ENCODE measurements at regions of chr6 and their contacts with region 1.

Region 1: GRCh38 chr6:100001915-100002388 is 7.9 kb upstream of the MCHR2 start:
- DNase-seq: peak; percentile 66
- H3K4me3 Mint-ChIP-seq: no peak overlapping the region
- H3K27ac Mint-ChIP-seq: no peak overlapping the region
- H3K4me1 Mint-ChIP-seq: peaks cover 8% of the 10 kb centered on the region
- H3K27me3 Mint-ChIP-seq: no peaks in the 10 kb centered on the region
- CTCF ChIP-seq: peak; percentile 91

Region 2: DNA sequence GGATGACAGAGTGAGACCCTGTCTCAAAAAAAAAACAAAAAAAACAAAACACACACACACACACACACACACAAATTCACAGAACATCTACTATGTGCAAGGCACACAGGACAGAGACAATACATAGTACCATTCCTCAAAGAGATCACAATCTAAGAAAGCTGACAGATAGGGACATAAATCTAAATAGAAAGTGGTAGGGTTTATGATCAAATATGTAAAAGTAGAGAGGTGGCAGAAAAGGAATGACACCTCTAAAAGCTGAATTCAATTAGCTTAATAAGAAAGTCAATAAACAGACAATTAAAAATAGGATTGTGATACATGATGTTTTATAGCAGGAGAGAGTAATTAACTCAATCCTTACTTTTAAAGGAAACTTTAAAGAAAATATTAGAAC is 528.2 kb before region 1 on chr6:
- CTCF ChIA-PET with region 1: no interaction called
- POLR2A ChIA-PET with region 1: no interaction called
- intact Hi-C with region 1: no loop called
- DNase-seq: no peak
- H3K4me3 Mint-ChIP-seq: no peak overlapping the region
- H3K27ac Mint-ChIP-seq: no peak overlapping the region
- H3K4me1 Mint-ChIP-seq: peaks cover 5% of the 10 kb centered on the region
- H3K27me3 Mint-ChIP-seq: no peaks in the 10 kb centered on the region
- CTCF ChIP-seq: no peak

Region 3: DNA sequence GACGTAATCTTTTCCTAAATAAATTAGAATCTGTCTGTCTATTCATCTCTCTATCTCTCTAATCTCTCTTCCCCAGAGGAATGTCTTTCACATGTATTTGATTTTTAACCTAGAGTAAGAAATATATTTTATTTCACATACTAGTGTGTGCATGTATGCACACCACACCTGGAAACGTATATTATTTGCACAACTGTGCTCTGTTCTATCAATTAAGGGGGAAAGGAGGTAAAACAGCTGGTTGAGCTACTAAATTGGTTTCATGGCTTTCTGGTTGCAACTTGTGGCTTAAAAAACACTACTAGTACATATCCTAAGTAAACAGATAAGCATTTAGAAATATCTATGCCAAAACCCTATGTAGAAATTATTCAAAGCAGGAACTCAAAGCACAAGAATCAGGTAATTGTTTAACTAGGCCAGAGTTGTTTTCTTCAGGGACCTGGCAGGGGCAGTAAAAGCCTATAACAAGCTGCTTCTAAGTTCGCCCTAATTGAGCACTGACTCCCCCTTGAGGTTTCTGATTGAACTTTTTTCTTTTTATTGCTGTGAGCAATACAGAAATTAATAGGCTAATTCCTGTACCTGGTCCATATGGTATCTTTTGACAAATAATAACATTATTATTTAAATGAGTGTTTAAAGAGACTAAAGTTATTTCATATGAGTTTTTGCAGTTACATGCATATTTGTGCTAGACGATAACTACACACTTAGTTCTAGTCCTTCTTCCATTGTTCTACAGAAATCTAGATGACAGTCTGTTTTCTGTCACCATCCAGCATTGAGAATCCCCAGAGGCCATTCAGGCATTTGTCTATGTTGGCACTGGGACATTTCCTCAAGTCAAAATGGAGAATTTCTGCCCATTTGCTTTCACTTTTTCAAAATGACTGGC is 96.5 kb before region 1 on chr6:
- CTCF ChIA-PET with region 1: interaction called, 18 read pairs
- POLR2A ChIA-PET with region 1: no interaction called
- intact Hi-C with region 1: loop called (anchors 5 kb)
- DNase-seq: peak; percentile 71
- H3K4me3 Mint-ChIP-seq: no peak overlapping the region
- H3K27ac Mint-ChIP-seq: no peak overlapping the region
- H3K4me1 Mint-ChIP-seq: no peaks in the 10 kb centered on the region
- H3K27me3 Mint-ChIP-seq: no peaks in the 10 kb centered on the region
- CTCF ChIP-seq: peak; percentile 74

Region 4: GRCh38 chr6:100078509-100078908 is 76.6 kb after region 1 on chr6:
- CTCF ChIA-PET with region 1: interaction called, 29 read pairs
- POLR2A ChIA-PET with region 1: no interaction called
- intact Hi-C with region 1: loop called (anchors 1 kb)
- DNase-seq: peak; percentile 77
- H3K4me3 Mint-ChIP-seq: no peak overlapping the region
- H3K27ac Mint-ChIP-seq: no peak overlapping the region
- H3K4me1 Mint-ChIP-seq: peaks cover 2% of the 10 kb centered on the region
- H3K27me3 Mint-ChIP-seq: no peaks in the 10 kb centered on the region
- CTCF ChIP-seq: peak; percentile 41

Region 5: GRCh38 chr6:100088009-100088408 is 86.1 kb after region 1 on chr6:
- CTCF ChIA-PET with region 1: interaction called, 15 read pairs
- POLR2A ChIA-PET with region 1: interaction called, 3 read pairs
- intact Hi-C with region 1: no loop called
- DNase-seq: peak; percentile 77
- H3K4me3 Mint-ChIP-seq: no peak overlapping the region
- H3K27ac Mint-ChIP-seq: peak overlapping the region; percentile 88
- H3K4me1 Mint-ChIP-seq: peaks cover 21% of the 10 kb centered on the region
- H3K27me3 Mint-ChIP-seq: no peaks in the 10 kb centered on the region
- CTCF ChIP-seq: no peak

Region 6: GRCh38 chr6:100099189-100100074 is 97.5 kb after region 1 on chr6:
- CTCF ChIA-PET with region 1: interaction called, 167 read pairs
- POLR2A ChIA-PET with region 1: interaction called, 9 read pairs
- intact Hi-C with region 1: loop called (anchors 1 kb)
- DNase-seq: peak; percentile 38
- H3K4me3 Mint-ChIP-seq: no peak overlapping the region
- H3K27ac Mint-ChIP-seq: no peak overlapping the region
- H3K4me1 Mint-ChIP-seq: peaks cover 4% of the 10 kb centered on the region
- H3K27me3 Mint-ChIP-seq: no peaks in the 10 kb centered on the region
- CTCF ChIP-seq: peak; percentile 26

Region 7: DNA sequence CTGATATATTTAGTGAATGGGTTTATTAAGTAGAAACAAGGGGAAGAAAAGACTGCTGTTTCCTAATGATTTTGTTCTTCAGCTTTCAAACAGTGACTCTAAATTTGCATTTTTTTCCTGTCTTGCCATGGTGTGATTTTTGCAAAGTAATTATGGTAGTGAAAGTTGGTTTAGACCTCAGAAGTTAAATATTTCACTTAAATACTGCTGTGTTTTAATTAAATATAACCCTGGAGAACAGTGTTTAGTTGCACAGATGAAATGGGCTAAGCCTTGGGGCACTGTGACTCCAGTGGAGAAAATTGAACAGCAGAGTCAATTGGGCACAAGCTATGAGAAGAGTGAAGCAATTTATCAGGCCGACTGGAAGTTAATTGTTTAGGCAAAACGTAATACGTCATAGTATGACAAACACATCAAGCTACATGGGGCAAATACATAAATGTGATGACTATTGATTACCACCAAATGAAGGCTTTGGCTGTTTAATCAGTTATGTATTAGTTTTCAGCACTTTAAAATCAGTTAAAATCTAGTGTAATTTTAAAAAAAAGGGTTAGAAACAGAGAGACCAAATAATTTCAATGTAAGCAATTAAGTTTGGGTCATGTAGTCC is 103.3 kb after region 1 on chr6:
- CTCF ChIA-PET with region 1: interaction called, 167 read pairs
- POLR2A ChIA-PET with region 1: interaction called, 9 read pairs
- intact Hi-C with region 1: no loop called
- DNase-seq: no peak
- H3K4me3 Mint-ChIP-seq: no peak overlapping the region
- H3K27ac Mint-ChIP-seq: no peak overlapping the region
- H3K4me1 Mint-ChIP-seq: peaks cover 5% of the 10 kb centered on the region
- H3K27me3 Mint-ChIP-seq: no peaks in the 10 kb centered on the region
- CTCF ChIP-seq: no peak

Region 8: DNA sequence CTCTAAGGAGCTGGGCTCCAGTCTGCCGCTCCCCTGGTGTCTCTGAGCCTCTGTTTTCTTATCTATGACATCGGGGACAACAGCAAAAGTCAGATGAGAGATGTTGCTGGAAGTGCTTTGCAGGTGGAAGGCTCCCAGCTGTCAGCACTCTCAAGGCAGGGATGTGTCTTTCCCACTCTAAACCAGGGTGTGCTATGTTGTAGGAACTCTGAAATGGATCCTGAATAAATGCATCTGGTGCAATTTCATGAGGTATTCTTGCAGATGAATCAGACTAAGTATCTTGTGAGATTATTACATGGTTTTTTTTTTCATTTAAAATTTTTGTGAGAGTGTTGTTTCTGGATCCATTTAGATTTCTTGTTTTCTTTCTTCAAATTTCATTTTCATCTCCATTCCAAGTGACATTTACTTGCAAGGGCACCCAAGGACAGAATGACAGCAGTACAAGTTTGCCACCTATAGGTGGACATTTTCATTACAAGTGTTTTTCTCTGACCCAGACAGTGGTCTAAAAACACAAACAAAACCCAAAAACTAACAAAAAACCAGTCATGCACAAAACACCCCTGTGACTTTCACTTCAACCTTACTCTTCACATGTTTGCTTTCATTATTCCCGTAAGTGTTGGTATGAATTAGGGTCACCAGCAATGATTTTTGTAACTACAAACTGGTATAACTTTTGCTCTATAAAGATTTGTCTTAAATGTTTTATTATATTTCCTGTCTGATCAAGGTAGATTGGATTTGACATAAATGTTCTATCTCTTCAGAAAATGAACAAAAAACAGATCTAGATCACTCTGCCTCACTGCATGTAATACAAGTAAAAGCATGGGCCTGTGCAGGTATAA is 477.5 kb after region 1 on chr6:
- CTCF ChIA-PET with region 1: no interaction called
- POLR2A ChIA-PET with region 1: no interaction called
- intact Hi-C with region 1: loop called (anchors 10 kb)
- DNase-seq: peak; percentile 55
- H3K4me3 Mint-ChIP-seq: no peak overlapping the region
- H3K27ac Mint-ChIP-seq: no peak overlapping the region
- H3K4me1 Mint-ChIP-seq: peaks cover 8% of the 10 kb centered on the region
- H3K27me3 Mint-ChIP-seq: no peaks in the 10 kb centered on the region
- CTCF ChIP-seq: peak; percentile 79

Measured in MCF 10A (cell line).